PC-9 (cell line): ENCODE measurements at regions of chr1 and their contacts with region 1.

Region 1: GRCh38 chr1:44594871-44595746 is 79.2 kb downstream of the TMEM53 start:
- DNase-seq: peak; percentile 55 to 84
- H3K4me3 ChIP-seq: no peak overlapping the region
- H3K27ac ChIP-seq: no peak overlapping the region
- H3K4me1 ChIP-seq: no peaks in the 10 kb centered on the region
- H3K27me3 ChIP-seq: peaks cover 4% of the 10 kb centered on the region
- CTCF ChIP-seq: peak; percentile 98

Region 2: GRCh38 chr1:44213222-44214112 is 381.6 kb before region 1 on chr1 and contains the start of gene DMAP1:
- CTCF ChIA-PET with region 1: interaction called, 3 read pairs
- POLR2A ChIA-PET with region 1: no interaction called
- intact Hi-C with region 1: loop called (anchors 1 kb)
- DNase-seq: peak; percentile 65 to 80
- H3K4me3 ChIP-seq: peak within 1 kb of the TSS; percentile 86
- H3K27ac ChIP-seq: peak within 1 kb of the TSS; percentile 27; the same call in 1 of the 2 replicates
- H3K4me1 ChIP-seq: peaks cover 17% of the 10 kb centered on the region; the same call in 1 of the 2 replicates
- H3K27me3 ChIP-seq: no peaks in the 10 kb centered on the region
- CTCF ChIP-seq: no peak
- total RNA-seq, gene DMAP1: 54.2 and 68.4 TPM in 2 replicates

Region 3: DNA sequence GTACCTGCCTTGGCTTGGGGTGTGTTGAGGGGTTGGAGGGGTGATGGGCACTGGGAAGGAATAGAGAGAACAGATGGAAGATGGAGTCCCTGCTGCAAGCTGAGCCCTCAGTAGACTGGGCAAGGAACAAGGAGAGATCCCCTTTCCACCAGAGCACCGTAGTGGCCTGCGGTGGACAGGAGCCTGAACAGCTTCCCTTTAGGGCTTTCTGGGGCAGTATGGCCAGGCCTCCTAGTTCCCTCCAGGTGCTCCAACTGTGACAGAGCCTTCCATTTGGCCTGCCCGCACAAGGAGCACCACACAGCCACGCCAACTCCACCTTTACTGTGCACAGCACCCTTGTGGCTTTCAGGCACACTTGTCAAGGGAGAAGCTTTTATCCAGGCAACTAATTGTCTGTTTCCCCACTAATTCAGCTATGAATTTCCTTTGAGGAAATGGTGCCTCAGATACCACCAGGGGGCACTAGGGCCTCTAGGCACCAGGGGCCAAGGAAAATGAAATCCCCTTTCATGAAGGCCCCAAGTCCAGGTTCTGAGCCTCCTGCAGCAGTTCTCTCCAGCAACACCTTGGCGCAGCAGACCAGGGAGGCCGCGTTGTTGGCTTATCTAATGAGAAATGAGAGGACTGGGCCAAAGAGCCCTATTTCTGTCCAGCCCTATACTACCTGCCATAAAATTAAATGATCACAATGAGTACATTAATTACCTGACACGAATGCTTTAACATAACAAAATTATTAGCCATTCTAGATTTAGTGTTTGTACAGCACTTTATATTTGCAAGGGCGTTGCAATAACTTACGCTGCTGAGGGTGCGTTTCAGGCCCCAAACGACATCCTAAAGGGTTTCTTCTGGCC is 217.0 kb before region 1 on chr1:
- CTCF ChIA-PET with region 1: interaction called, 12 read pairs
- POLR2A ChIA-PET with region 1: interaction called, 5 read pairs
- intact Hi-C with region 1: loop called (anchors 1 kb)
- DNase-seq: peak in 1 of 2 experiments; percentile 61
- H3K4me3 ChIP-seq: no peak overlapping the region
- H3K27ac ChIP-seq: no peak overlapping the region
- H3K4me1 ChIP-seq: no peaks in the 10 kb centered on the region
- H3K27me3 ChIP-seq: no peaks in the 10 kb centered on the region
- CTCF ChIP-seq: peak; percentile 78

Region 4: GRCh38 chr1:44584167-44584566 is 10.9 kb before region 1 on chr1:
- CTCF ChIA-PET with region 1: no interaction called
- POLR2A ChIA-PET with region 1: interaction called, 18 read pairs
- intact Hi-C with region 1: no loop called
- DNase-seq: no peak
- H3K4me3 ChIP-seq: no peak overlapping the region
- H3K27ac ChIP-seq: no peak overlapping the region
- H3K4me1 ChIP-seq: 0 out of 2 replicates have a peak, but pooled peaks cover 8% of the 10 kb centered on the region
- H3K27me3 ChIP-seq: no peaks in the 10 kb centered on the region
- CTCF ChIP-seq: no peak

Region 5: DNA sequence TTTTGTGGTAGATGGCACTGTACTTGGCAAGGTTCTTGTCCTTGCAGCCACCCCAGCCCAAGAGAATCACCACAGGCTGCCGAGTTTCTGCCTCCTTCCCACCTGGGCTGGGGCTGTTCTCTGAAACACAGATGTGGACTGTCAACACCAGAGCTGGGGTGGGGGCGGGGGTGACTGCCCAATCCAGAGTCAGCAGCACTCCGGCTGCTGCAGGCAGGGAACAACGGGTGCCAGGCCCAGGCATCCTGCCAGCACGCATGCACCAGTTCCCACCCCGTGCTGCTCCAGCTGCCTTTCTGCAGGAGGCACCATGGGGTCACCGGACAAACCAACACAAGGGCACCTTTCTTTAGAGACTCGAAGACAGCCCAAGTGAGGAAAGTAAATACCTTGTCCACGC is 65.1 kb after region 1 on chr1:
- CTCF ChIA-PET with region 1: interaction called, 11 read pairs
- POLR2A ChIA-PET with region 1: no interaction called
- intact Hi-C with region 1: no loop called
- DNase-seq: peak in 1 of 2 experiments; percentile 17
- H3K4me3 ChIP-seq: no peak overlapping the region
- H3K27ac ChIP-seq: no peak overlapping the region
- H3K4me1 ChIP-seq: no peaks in the 10 kb centered on the region
- H3K27me3 ChIP-seq: no peaks in the 10 kb centered on the region
- CTCF ChIP-seq: no peak